Activated B cell treated with CpG ODN at 0.5 μM for 24 hours (primary cell): ENCODE measurements at regions of chr11 and their contacts with region 1.

Region 1: DNA sequence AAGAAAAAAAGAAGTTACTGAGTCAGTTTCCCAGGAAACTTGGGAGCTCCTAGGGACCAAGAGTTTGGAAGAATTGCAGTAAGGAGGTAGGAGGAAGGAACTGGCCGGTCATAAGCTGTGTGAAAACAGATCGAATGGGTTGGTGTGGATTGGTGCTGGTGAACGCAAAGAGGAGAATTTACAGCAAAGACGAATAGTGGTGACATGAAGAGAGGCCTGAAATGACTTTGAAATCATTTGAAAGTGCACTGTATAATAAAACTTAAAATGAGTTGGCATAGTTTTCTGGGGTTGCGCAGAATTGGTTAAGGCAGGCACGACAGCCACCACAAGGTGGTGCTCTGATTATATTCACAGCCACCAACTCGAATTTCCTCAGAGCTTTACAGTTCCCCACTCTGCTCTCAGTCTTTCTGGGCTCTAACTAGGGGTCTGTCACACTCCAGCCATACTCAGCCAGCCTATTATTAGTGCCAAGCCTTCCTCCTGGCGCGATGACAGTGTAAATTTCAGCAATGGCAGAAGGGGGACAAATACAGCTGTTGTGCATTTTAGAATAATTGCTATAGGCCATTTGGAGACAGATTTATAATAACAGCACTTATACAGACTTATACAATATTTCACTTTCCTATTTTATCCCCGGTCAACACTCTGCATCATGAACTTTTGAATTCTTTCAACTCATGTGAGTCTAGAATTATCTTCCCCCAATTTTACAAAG is 8.3 kb upstream of the HTR3B start:
- DNase-seq: no peak
- ATAC-seq: peak; percentile 73
- H3K4me3 Mint-ChIP-seq: no peak overlapping the region
- H3K27ac Mint-ChIP-seq: peak overlapping the region; percentile 37
- H3K4me1 Mint-ChIP-seq: peaks cover 21% of the 10 kb centered on the region
- H3K27me3 Mint-ChIP-seq: no peaks in the 10 kb centered on the region
- CTCF ChIP-seq: peak; percentile 67

Region 2: DNA sequence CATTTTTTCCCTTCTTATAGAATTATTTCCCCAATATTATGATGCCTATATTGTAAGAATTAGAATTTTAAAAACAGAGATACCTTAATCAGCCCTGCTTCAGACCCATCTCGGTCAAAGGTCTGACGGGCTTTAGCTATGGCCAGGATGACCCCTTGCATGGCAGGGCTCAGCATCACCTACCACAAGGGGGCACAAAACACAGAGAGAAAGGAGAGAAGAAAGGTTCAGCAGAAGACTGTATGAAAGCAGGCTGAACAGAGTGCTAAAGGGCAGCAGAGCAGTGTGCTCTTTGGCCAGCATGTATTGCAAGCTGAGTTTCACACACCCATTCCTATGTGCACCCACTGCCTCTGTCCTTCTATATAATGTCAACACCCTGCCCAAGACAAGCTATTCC is 89.9 kb before region 1 on chr11:
- CTCF ChIA-PET with region 1: interaction called, 15 read pairs
- POLR2A ChIA-PET with region 1: no interaction called
- intact Hi-C with region 1: loop called (anchors 1 kb)
- DNase-seq: no peak
- ATAC-seq: peak; percentile 57
- H3K4me3 Mint-ChIP-seq: no peak overlapping the region
- H3K27ac Mint-ChIP-seq: no peak overlapping the region
- H3K4me1 Mint-ChIP-seq: peaks cover 1% of the 10 kb centered on the region
- H3K27me3 Mint-ChIP-seq: no peaks in the 10 kb centered on the region
- CTCF ChIP-seq: no peak

Region 3: GRCh38 chr11:113831314-113831713 is 65.0 kb before region 1 on chr11:
- CTCF ChIA-PET with region 1: no interaction called
- POLR2A ChIA-PET with region 1: no interaction called
- intact Hi-C with region 1: no loop called
- DNase-seq: no peak
- ATAC-seq: peak; percentile 93
- H3K4me3 Mint-ChIP-seq: peak overlapping the region; percentile 68
- H3K27ac Mint-ChIP-seq: peak overlapping the region; percentile 84
- H3K4me1 Mint-ChIP-seq: peaks cover 31% of the 10 kb centered on the region
- H3K27me3 Mint-ChIP-seq: no peaks in the 10 kb centered on the region
- CTCF ChIP-seq: no peak

Region 4: GRCh38 chr11:114075891-114076441 is 179.6 kb after region 1 on chr11:
- CTCF ChIA-PET with region 1: no interaction called
- POLR2A ChIA-PET with region 1: no interaction called
- intact Hi-C with region 1: loop called (anchors 1 kb)
- DNase-seq: no peak
- ATAC-seq: no peak
- H3K4me3 Mint-ChIP-seq: no peak overlapping the region
- H3K27ac Mint-ChIP-seq: no peak overlapping the region
- H3K4me1 Mint-ChIP-seq: peaks cover 36% of the 10 kb centered on the region
- H3K27me3 Mint-ChIP-seq: peaks cover 35% of the 10 kb centered on the region
- CTCF ChIP-seq: no peak

Region 5: DNA sequence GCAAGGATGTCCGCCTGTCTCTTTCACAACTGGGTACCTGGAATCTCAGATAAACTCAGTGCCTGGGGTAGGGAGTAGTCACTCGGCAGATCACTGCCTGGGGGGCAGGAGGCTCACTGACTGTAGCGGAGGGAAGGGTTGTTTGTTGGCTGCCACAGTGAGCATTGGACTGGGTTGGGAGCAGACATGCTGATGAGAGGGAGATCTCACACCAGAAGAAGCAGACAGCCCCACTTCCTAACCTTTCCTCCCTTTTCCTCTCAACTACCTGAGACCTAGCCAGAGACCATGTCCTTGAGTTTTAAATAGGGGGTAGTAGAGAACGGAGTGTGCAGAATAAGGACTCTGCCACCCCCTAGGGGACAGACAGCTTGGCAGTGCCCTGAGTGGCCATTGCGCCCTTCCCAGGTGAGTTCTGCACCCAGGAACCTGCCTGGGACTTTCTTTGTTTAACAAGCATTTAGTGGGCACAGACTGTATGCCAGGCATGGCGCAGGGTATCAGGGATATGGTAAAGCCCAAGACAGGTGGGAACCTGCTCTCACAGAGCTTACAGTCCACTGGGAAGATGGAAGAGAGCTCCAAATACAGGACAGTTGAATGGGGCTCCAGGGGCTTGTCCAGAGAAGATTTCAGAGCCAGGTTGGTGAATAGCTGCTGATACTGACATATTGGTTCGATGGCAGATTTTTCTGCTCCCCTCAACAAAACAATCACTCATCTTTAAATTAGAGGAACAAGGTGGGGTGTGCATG is 284.2 kb after region 1 on chr11:
- CTCF ChIA-PET with region 1: interaction called, 11 read pairs
- POLR2A ChIA-PET with region 1: no interaction called
- intact Hi-C with region 1: loop called (anchors 1 kb)
- DNase-seq: no peak
- ATAC-seq: peak; percentile 55
- H3K4me3 Mint-ChIP-seq: no peak overlapping the region
- H3K27ac Mint-ChIP-seq: peak overlapping the region; percentile 69
- H3K4me1 Mint-ChIP-seq: peaks cover 70% of the 10 kb centered on the region
- H3K27me3 Mint-ChIP-seq: no peaks in the 10 kb centered on the region
- CTCF ChIP-seq: no peak

Region 6: DNA sequence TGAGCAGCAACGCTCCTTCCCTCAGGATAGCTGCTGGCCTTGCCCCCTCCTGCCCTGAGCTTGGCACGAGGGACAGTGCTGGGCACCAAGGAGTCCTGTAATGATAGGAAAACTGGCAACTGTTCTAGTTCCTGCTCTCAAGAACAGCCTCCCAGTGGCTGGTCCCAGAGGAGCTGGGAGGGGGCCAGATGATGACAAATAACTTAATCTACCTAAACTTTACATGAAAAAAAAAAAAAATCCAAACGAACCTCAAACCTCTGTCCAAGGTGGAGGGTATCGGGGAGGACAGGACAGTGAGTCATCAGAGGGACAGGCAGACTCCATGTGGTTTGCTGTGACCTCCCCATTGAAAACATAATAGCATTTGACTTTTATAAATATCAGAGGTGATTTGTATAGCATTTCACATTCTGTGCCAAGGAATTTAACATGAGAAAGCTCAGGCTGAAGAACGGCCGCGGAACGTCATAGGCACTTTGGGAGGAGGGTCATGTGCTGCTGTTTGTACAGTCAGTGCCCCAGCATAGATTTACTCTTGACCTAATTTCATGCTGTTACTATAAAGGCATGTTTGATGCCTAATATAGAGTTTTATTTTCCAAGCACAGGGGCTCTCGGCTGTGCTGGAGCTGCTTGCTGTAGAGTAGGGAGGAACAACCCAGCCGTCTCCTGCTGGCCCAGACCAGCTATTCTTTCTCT is 301.6 kb after region 1 on chr11:
- CTCF ChIA-PET with region 1: interaction called, 9 read pairs
- POLR2A ChIA-PET with region 1: no interaction called
- intact Hi-C with region 1: loop called (anchors 2 kb)
- DNase-seq: no peak
- ATAC-seq: no peak
- H3K4me3 Mint-ChIP-seq: no peak overlapping the region
- H3K27ac Mint-ChIP-seq: no peak overlapping the region
- H3K4me1 Mint-ChIP-seq: peaks cover 45% of the 10 kb centered on the region
- H3K27me3 Mint-ChIP-seq: no peaks in the 10 kb centered on the region
- CTCF ChIP-seq: no peak